Posterior cingulate gyrus (tissue), 11 donors: ENCODE measurements at regions of chr19 and their contacts with region 1.

Region 1: DNA sequence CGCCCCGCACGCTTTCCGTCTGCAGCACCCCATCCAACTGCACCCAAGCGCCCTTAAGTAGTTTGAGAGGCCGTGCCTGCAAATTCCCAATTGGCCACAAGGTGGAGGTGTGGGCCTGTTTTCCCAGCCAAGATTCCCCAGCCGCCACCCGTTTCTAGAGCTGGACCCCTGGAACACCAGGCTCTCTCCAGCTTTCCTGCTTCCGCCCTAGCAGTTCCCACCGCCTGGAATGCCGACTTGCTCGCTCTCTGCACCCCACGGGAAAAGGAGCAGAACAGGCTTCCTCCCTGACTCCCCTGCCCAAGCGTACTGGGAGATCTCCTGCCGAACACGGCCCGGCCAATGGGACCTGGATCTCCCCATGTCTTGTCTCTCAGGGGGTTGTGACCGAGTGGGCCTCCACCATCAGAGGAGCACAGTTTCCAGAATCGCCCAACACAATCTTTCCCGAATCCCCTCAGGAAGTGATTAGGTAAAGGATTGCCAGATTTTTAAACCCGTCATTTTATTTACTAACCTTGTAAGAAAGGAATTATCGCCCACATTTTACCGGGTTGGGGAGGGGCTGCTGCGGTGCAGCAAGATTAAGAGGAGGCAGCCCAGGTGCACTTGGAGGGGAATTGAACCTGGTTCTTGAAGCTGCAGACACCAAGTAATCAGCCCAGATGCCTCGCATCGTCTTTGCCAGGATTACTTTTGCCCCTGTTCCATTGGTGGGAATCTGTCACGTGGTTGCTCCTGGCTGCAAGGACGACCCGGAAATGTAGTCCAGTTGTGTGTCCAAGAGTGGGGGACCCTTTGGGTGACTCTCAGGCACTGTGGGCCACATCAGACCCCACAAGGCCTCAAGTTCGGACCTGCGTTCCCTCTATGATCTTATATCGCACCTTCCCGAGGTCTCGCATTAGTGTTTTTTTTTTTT is 3.5 kb upstream of the NAPSA start:
- DNase-seq: peak; percentile 76 to 97 (median 88)

Region 2: GRCh38 chr19:50402544-50403301 is 33.8 kb after region 1 on chr19:
- intact Hi-C with region 1: no loop called
- DNase-seq: peak in 2 of 10 donors; percentile 54 to 56

Region 3: GRCh38 chr19:50461066-50461875 is 92.4 kb after region 1 on chr19:
- intact Hi-C with region 1: loop called (anchors 1 kb)
- DNase-seq: peak in 9 of 10 donors; percentile 43 to 93 (median 58)